ENCODE measurements at regions of chr7 and their contacts with region 1.

Region 1: GRCh38 chr7:55594870-55595269 is 22.6 kb upstream of the VOPP1 start:
- DNase-seq: no peak
- ATAC-seq: no peak
- H3K4me3 ChIP-seq: no peak overlapping the region
- H3K4me3 Mint-ChIP-seq: no peak overlapping the region
- H3K27ac ChIP-seq: no peak overlapping the region
- H3K27ac Mint-ChIP-seq: no peak overlapping the region
- H3K4me1 ChIP-seq: no peaks in the 10 kb centered on the region
- H3K4me1 Mint-ChIP-seq: peaks cover 0 to 5% of the 10 kb centered on the region in 2 donors
- H3K27me3 ChIP-seq: no peaks in the 10 kb centered on the region
- H3K27me3 Mint-ChIP-seq: peaks cover 9 to 10% of the 10 kb centered on the region in 2 donors
- CTCF ChIP-seq: no peak

Region 2: DNA sequence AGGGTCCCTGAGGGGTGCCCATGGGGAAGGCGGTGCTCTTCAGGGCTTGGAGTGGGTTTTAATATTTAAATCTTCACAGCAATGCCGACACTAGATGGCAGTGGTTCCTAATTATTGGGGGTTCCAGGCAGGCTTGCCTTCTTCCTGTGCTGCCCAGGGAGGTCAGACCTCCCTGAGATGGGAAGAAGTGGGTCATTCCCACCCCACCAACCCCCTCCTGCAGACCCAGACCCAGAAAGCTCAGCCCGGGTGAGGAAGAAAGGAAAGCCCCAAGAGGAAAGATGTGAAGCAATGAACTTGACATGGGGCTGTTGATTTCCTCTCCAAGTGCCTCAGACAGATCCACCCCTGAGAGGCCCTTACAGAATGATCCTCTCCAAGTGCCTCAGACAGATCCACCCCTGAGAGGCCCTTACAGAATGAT is 314.8 kb before region 1 on chr7:
- intact Hi-C with region 1: loop called (anchors 5 kb)
- DNase-seq: peak; percentile 33 to 84
- ATAC-seq: peak; percentile 72 to 92 (median 85)
- H3K4me3 ChIP-seq: no peak overlapping the region
- H3K4me3 Mint-ChIP-seq: no peak overlapping the region
- H3K27ac ChIP-seq: no peak overlapping the region
- H3K27ac Mint-ChIP-seq: no peak overlapping the region
- H3K4me1 ChIP-seq: peaks cover 5% of the 10 kb centered on the region
- H3K4me1 Mint-ChIP-seq: peaks cover 5 to 6% of the 10 kb centered on the region in 2 donors
- H3K27me3 ChIP-seq: peaks cover 2% of the 10 kb centered on the region
- H3K27me3 Mint-ChIP-seq: peaks cover 12 to 20% of the 10 kb centered on the region in 2 donors
- CTCF ChIP-seq: peak; percentile 76

Region 3: GRCh38 chr7:55432939-55433784 is 161.7 kb before region 1 on chr7:
- intact Hi-C with region 1: loop called (anchors 5 kb)
- DNase-seq: peak in 1 of 2 donors; percentile 62
- ATAC-seq: peak in 2 of 3 donors; percentile 40 to 54
- H3K4me3 ChIP-seq: no peak overlapping the region
- H3K4me3 Mint-ChIP-seq: no peak overlapping the region
- H3K27ac ChIP-seq: no peak overlapping the region
- H3K27ac Mint-ChIP-seq: peak overlapping the region in 1 of 2 donors; percentile 21
- H3K4me1 ChIP-seq: peaks cover 9% of the 10 kb centered on the region
- H3K4me1 Mint-ChIP-seq: peaks cover 12 to 13% of the 10 kb centered on the region in 2 donors
- H3K27me3 ChIP-seq: no peaks in the 10 kb centered on the region
- H3K27me3 Mint-ChIP-seq: no peaks in the 10 kb centered on the region
- CTCF ChIP-seq: peak; percentile 15

Measured in natural killer cell (primary cell).